Activated CD4-positive, alpha-beta T cell treated with anti-CD3 and anti-CD28 coated beads for 36 hours (primary cell): ENCODE measurements at regions of chr11 and their contacts with region 1.

Region 1: DNA sequence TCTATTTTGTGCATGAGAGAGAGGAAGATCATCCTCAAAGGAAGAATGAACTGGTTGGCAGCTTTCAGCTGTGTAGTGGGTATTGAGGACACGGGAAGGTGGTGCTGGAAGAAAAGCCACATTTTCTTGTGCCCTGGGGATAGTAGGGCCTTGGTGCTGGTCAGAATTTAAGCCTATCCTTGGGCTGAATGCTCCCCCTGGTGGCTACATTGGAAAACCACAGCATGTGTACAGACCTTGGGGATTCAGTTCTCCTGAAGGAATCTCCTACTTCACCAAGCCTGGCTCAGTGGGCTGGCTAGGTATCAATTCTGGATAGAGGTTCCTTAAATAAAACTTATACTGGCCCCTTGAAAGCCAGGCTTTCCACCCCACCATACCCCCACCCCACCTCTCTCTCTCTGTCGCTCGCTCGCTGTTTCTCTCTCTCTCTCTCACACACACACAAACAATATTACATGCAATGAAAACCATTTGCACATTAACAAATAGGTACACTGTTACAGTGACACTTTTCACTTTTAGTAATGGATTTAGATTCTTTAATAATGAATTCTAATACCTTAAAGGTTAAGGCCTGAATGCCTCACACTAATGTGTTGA is 2.8 kb upstream of the OR51M1 start:
- DNase-seq: peak; percentile 54
- ATAC-seq: peak; percentile 55
- H3K4me3 Mint-ChIP-seq: no peak overlapping the region
- H3K27ac Mint-ChIP-seq: no peak overlapping the region
- H3K4me1 Mint-ChIP-seq: no peaks in the 10 kb centered on the region
- H3K27me3 Mint-ChIP-seq: no peaks in the 10 kb centered on the region

Region 2: GRCh38 chr11:4626207-4627099 is 754.4 kb before region 1 on chr11:
- CTCF ChIA-PET with region 1: interaction called, 3 read pairs
- POLR2A ChIA-PET with region 1: no interaction called
- intact Hi-C with region 1: loop called in 1 of 2 experiments (anchors 1 kb)
- DNase-seq: peak; percentile 81
- ATAC-seq: peak; percentile 42
- H3K4me3 Mint-ChIP-seq: no peak overlapping the region
- H3K27ac Mint-ChIP-seq: no peak overlapping the region
- H3K4me1 Mint-ChIP-seq: no peaks in the 10 kb centered on the region
- H3K27me3 Mint-ChIP-seq: peaks cover 38% of the 10 kb centered on the region

Region 3: DNA sequence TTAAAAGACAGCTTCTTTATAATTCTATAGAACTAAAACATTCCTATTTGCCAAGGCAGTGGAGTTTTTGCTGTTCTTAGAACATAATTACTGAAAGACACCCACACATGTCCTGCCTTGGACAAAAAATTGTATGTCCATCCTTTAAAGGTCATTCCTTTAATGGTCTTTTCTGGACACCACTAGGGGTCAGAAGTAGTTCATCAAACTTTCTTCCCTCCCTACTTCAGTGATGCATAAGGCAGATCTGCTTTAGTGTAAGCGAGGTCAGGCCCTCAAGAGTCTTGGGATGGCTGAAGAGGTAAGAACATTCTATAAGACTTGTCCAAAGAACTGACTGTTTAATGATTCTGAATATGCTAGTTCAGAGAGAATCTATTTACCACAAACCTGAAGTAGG is 176.1 kb before region 1 on chr11:
- CTCF ChIA-PET with region 1: no interaction called
- POLR2A ChIA-PET with region 1: no interaction called
- intact Hi-C with region 1: loop called in 1 of 2 experiments (anchors 10 kb)
- DNase-seq: no peak
- ATAC-seq: no peak
- H3K4me3 Mint-ChIP-seq: no peak overlapping the region
- H3K27ac Mint-ChIP-seq: no peak overlapping the region
- H3K4me1 Mint-ChIP-seq: no peaks in the 10 kb centered on the region
- H3K27me3 Mint-ChIP-seq: peaks cover 6% of the 10 kb centered on the region